Posterior vena cava (tissue), 2 donors: ENCODE measurements at regions of chr4 and their contacts with region 1.

Region 1: DNA sequence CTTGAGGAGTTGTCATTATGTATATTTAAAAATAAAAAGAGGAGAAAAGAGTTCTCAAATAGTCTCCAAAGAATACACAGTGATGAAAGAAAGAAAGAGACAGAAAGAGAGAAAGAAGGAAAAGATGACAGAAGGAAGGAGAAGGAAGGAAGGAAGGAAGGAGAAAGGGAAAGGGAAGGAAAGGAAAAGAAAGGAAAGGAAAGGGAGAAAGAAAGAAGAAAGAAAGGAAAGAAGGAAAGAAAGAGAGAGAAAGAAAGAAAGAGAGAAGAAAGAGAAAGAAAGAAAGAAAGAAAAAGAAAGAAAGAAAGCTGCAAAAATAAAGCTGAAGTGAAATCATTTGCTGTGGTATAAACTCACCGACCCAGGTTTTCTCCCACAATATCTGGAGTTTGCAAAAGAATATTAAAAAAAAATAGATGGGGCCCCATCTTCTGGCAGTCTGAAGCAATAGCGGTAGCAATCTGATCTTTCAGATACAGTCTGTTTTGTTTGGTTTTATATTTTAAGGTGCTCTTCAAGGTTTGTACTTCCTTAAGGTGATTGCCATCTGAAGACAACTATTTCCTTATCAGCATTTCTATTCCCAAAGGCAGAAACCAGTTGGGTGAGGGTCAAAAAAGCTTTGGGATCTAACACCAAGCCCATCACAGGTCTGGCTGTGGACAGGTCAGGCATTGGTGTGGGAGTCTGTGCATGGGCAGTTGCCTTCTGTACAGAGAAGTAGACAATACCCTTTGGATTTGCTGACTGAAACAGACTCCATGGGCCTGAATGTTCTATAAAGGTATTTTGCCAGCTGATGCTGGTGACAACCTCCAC is 160.4 kb downstream of the CPEB2 start:
- DNase-seq: no peak

Region 2: DNA sequence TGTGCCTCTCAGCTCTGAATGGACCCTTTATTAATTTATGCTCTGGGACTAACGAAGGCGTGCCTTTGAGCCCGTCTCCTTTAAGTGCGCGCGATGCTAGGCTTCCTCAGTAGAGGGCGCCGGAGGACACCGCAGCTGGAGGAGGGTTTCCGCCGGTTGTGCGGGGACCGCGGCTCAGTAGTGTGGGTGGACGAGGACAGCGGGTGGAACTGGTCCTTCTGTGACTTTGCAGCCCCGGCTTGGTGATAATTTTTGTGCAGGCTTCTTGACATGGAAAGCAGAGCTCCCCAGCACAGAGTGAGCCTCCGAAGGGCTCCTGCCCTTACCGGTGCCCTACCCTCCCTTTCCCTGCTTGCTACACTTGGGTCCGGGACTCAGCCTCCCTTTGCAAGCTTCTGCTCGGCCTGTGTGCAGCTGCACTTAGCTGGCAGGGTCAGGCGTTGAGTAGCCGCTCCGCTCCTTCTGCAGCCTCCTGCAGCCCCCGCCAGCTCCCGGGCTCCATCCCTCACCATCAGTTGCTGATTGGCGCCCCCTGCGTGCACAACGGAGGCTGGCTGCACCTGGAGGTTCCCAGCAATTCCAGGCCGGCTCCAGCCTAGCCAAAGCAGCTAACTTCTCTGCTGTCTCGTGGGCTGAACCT is 1508.4 kb before region 1 on chr4:
- intact Hi-C with region 1: loop called in 1 of 2 experiments (anchors 10 kb)
- DNase-seq: peak; percentile 94